ENCODE measurements at regions of chr12 and their contacts with region 1.

Region 1: GRCh38 chr12:109093022-109093918 is at the start of gene ALKBH2:
- DNase-seq: peak; percentile 92
- H3K4me3 ChIP-seq: peak within 1 kb of the TSS; percentile 39
- H3K27ac ChIP-seq: peak within 1 kb of the TSS; percentile 23
- H3K4me1 ChIP-seq: peaks cover 8% of the 10 kb centered on the region
- H3K27me3 ChIP-seq: no peaks in the 10 kb centered on the region
- CTCF ChIP-seq: peak; percentile 98
- total RNA-seq, gene ALKBH2: 5.0 to 8.9 TPM

Region 2: GRCh38 chr12:108664338-108665258 is 428.7 kb before region 1 on chr12:
- intact Hi-C with region 1: loop called (anchors 10 kb)
- DNase-seq: peak; percentile 89
- H3K4me3 ChIP-seq: no peak overlapping the region
- H3K27ac ChIP-seq: peak overlapping the region; percentile 38
- H3K4me1 ChIP-seq: no peaks in the 10 kb centered on the region
- H3K27me3 ChIP-seq: no peaks in the 10 kb centered on the region
- CTCF ChIP-seq: peak; percentile 74

Region 3: GRCh38 chr12:108884116-108885012 is 208.9 kb before region 1 on chr12:
- intact Hi-C with region 1: loop called (anchors 5 kb)
- DNase-seq: peak; percentile 66
- H3K4me3 ChIP-seq: no peak overlapping the region
- H3K27ac ChIP-seq: no peak overlapping the region
- H3K4me1 ChIP-seq: no peaks in the 10 kb centered on the region
- H3K27me3 ChIP-seq: no peaks in the 10 kb centered on the region
- CTCF ChIP-seq: peak; percentile 70

Region 4: GRCh38 chr12:108950991-108951739 is 142.1 kb before region 1 on chr12:
- intact Hi-C with region 1: loop called (anchors 5 kb)
- DNase-seq: peak; percentile 76
- H3K4me3 ChIP-seq: no peak overlapping the region
- H3K27ac ChIP-seq: no peak overlapping the region
- H3K4me1 ChIP-seq: no peaks in the 10 kb centered on the region
- H3K27me3 ChIP-seq: no peaks in the 10 kb centered on the region
- CTCF ChIP-seq: peak; percentile 91

Region 5: DNA sequence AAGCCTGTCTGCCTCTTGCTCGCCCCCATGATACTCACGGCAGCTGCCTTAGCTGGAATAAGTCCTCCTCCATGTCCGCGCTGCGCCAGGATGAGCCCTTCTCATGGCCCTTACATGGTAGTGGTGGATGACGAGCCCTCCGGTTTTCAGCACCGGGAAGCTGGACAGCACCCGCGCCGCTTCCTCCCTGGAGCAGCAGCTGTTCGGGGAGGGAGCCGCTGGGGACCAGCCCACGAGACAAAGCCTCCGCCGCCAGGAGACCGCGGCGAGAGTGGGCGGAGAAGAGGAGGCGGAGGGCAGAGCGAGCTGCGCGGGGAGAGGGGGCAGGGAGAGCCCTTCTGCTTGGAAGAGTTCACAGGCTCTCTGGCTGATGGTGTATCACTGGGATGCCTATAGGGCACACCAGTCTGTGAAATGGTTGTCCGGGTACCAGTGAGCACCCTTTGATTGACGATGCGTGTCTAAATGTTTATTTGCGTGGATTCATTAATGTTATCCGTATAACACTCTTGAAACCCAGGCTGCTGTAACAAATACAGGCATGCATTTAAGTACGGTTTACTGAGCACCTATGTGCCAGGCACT is 72.4 kb before region 1 on chr12 and contains the start of gene SVOP:
- intact Hi-C with region 1: no loop called
- DNase-seq: peak; percentile 70
- H3K4me3 ChIP-seq: no peak within 1 kb of the TSS
- H3K27ac ChIP-seq: no peak within 1 kb of the TSS
- H3K4me1 ChIP-seq: no peaks in the 10 kb centered on the region
- H3K27me3 ChIP-seq: no peaks in the 10 kb centered on the region
- CTCF ChIP-seq: no peak
- total RNA-seq, gene SVOP: 0.15 to 0.50 TPM

Region 6: DNA sequence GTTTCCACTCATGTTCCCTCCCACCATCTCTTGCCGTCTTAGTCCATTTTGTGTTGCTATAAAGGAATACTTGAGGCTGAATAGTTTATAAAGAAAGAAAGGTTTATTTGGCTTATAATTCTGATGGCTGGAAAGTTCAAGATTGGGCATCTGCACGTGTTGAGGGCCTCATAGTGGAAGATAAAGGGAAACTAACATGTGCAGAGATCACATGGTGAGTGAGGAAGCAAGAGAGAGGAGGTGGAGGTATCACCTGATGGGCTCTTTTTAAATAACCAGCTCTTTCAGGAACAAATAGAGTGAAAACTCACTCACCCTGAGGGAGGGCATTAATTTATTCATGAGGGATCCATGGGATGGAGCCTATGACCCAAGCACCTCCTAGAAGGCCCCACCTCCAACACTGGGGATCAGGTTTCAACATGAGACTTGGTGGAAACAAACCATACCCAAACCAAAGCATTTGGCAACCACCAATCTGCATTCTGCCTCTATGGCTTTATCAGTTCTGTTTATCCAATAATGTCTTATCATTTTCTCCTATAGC is 283.9 kb after region 1 on chr12:
- intact Hi-C with region 1: no loop called
- DNase-seq: no peak
- H3K4me3 ChIP-seq: no peak overlapping the region
- H3K27ac ChIP-seq: no peak overlapping the region
- H3K4me1 ChIP-seq: no peaks in the 10 kb centered on the region
- H3K27me3 ChIP-seq: no peaks in the 10 kb centered on the region
- CTCF ChIP-seq: no peak